ENCODE measurements at regions of chr6 and their contacts with region 1.

Region 1: GRCh38 chr6:123316733-123317323 is 319.9 kb downstream of the TRDN start:
- DNase-seq: no peak
- H3K4me3 ChIP-seq: no peak overlapping the region
- H3K27ac ChIP-seq: no peak overlapping the region
- H3K4me1 ChIP-seq: no peaks in the 10 kb centered on the region
- H3K27me3 ChIP-seq: no peaks in the 10 kb centered on the region
- CTCF ChIP-seq: peak; percentile 40 to 76 (median 55)
- POLR2A ChIP-seq: no peak

Region 2: GRCh38 chr6:122869437-122870024 is 447.3 kb before region 1 on chr6:
- intact Hi-C with region 1: loop called (anchors 5 kb)
- DNase-seq: peak; percentile 45
- H3K4me3 ChIP-seq: no peak overlapping the region
- H3K27ac ChIP-seq: no peak overlapping the region
- H3K4me1 ChIP-seq: no peaks in the 10 kb centered on the region
- H3K27me3 ChIP-seq: no peaks in the 10 kb centered on the region
- CTCF ChIP-seq: peak in 3 of 4 experiments; percentile 46 to 81 (median 62)
- POLR2A ChIP-seq: no peak

Region 3: GRCh38 chr6:122947355-122947754 is 369.5 kb before region 1 on chr6:
- intact Hi-C with region 1: loop called (anchors 2 kb)
- DNase-seq: no peak
- H3K4me3 ChIP-seq: no peak overlapping the region
- H3K27ac ChIP-seq: no peak overlapping the region
- H3K4me1 ChIP-seq: no peaks in the 10 kb centered on the region
- H3K27me3 ChIP-seq: no peaks in the 10 kb centered on the region
- CTCF ChIP-seq: peak in 2 of 4 experiments; percentile 16 to 40
- POLR2A ChIP-seq: no peak

Region 4: GRCh38 chr6:123053602-123054225 is 263.1 kb before region 1 on chr6:
- intact Hi-C with region 1: no loop called
- DNase-seq: no peak
- H3K4me3 ChIP-seq: no peak overlapping the region
- H3K27ac ChIP-seq: no peak overlapping the region
- H3K4me1 ChIP-seq: no peaks in the 10 kb centered on the region
- H3K27me3 ChIP-seq: no peaks in the 10 kb centered on the region
- CTCF ChIP-seq: no peak
- POLR2A ChIP-seq: no peak